ENCODE measurements at regions of chr9 and their contacts with region 1.

Region 1: DNA sequence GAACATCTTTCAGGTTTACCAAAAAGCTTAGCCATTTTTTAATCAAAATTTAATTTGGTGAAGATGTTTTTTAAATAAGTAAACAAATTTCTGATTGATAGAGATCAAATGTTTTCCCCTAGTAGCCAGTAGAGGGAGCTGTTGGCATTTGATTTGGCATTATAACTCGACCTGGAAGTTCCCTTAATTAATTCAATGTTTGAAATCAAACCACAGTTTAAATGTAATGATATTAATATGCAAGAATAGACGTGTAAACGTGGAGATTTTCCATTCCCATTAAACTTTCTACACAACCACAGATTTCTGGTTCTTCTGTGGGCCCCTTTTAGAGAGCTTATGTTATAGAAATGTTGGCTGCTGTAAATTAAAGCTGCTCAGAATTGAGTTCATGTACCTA is 148.1 kb upstream of the MPDZ start:
- DNase-seq: peak; percentile 78
- H3K4me3 ChIP-seq: no peak overlapping the region
- H3K27ac ChIP-seq: peak overlapping the region; percentile 34
- H3K4me1 ChIP-seq: peaks cover 6% of the 10 kb centered on the region
- H3K27me3 ChIP-seq: no peaks in the 10 kb centered on the region
- CTCF ChIP-seq: peak; percentile 40 to 43
- POLR2A ChIP-seq: no peak

Region 2: GRCh38 chr9:13110766-13111417 is 316.7 kb before region 1 on chr9:
- CTCF ChIA-PET with region 1: no interaction called
- POLR2A ChIA-PET with region 1: no interaction called
- dilution Hi-C with region 1: no loop called
- intact Hi-C with region 1: no loop called
- DNase-seq: no peak
- H3K4me3 ChIP-seq: no peak overlapping the region
- H3K27ac ChIP-seq: no peak overlapping the region
- H3K4me1 ChIP-seq: no peaks in the 10 kb centered on the region
- H3K27me3 ChIP-seq: no peaks in the 10 kb centered on the region
- CTCF ChIP-seq: no peak
- POLR2A ChIP-seq: no peak

Region 3: GRCh38 chr9:13351778-13352386 is 75.7 kb before region 1 on chr9:
- CTCF ChIA-PET with region 1: interaction called, 14 read pairs
- POLR2A ChIA-PET with region 1: no interaction called
- dilution Hi-C with region 1: no loop called
- intact Hi-C with region 1: loop called (anchors 5 kb)
- DNase-seq: peak; percentile 74
- H3K4me3 ChIP-seq: no peak overlapping the region
- H3K27ac ChIP-seq: no peak overlapping the region
- H3K4me1 ChIP-seq: no peaks in the 10 kb centered on the region
- H3K27me3 ChIP-seq: no peaks in the 10 kb centered on the region
- CTCF ChIP-seq: peak; percentile 32 to 37
- POLR2A ChIP-seq: no peak

Region 4: GRCh38 chr9:13568841-13569601 is 141.4 kb after region 1 on chr9:
- CTCF ChIA-PET with region 1: interaction called, 3 read pairs
- POLR2A ChIA-PET with region 1: no interaction called
- dilution Hi-C with region 1: no loop called
- intact Hi-C with region 1: loop called (anchors 5 kb)
- DNase-seq: peak; percentile 62
- H3K4me3 ChIP-seq: peak overlapping the region in 2 of 3 experiments; percentile 3 to 45
- H3K27ac ChIP-seq: peak overlapping the region; percentile 54
- H3K4me1 ChIP-seq: peaks cover 25% of the 10 kb centered on the region
- H3K27me3 ChIP-seq: no peaks in the 10 kb centered on the region
- CTCF ChIP-seq: no peak
- POLR2A ChIP-seq: no peak

Region 5: DNA sequence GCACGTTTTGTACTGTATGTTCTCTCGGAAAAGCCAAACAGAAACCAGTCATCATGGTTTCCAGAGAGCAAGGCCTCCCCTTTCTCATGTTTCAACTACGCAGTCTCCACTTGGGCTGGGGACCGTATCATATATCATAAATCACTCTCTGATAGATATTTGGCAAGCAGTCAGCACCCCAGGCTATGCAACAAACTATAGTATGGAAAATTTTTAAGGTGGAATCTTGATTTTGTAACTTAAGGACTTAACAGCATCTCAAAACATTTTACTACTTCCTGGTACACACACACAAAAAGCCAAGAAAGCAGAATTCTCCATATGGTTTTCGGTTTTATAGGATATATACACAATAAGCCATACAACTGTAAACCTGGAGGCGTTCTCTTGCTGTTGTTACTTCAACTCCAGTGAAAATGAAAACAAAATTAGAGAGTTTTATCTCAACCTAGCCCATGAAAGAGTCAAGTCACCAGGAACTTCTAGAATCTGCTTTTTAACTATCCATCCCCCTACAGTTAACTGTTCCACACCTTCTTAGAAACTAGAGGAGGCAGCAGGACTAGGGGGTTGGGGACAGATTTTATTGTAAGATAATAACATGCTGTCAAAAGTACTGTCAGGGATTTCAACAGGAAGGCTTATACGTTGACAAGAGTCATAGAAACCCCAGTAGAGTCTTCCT is 602.9 kb after region 1 on chr9:
- CTCF ChIA-PET with region 1: interaction called, 11 read pairs
- POLR2A ChIA-PET with region 1: no interaction called
- dilution Hi-C with region 1: no loop called
- intact Hi-C with region 1: loop called (anchors 2 kb)
- DNase-seq: peak; percentile 97
- H3K4me3 ChIP-seq: peak overlapping the region in 2 of 3 experiments; percentile 25 to 46
- H3K27ac ChIP-seq: peak overlapping the region; percentile 88
- H3K4me1 ChIP-seq: peaks cover 44% of the 10 kb centered on the region
- H3K27me3 ChIP-seq: no peaks in the 10 kb centered on the region
- CTCF ChIP-seq: no peak
- POLR2A ChIP-seq: peak; percentile 31

Region 6: DNA sequence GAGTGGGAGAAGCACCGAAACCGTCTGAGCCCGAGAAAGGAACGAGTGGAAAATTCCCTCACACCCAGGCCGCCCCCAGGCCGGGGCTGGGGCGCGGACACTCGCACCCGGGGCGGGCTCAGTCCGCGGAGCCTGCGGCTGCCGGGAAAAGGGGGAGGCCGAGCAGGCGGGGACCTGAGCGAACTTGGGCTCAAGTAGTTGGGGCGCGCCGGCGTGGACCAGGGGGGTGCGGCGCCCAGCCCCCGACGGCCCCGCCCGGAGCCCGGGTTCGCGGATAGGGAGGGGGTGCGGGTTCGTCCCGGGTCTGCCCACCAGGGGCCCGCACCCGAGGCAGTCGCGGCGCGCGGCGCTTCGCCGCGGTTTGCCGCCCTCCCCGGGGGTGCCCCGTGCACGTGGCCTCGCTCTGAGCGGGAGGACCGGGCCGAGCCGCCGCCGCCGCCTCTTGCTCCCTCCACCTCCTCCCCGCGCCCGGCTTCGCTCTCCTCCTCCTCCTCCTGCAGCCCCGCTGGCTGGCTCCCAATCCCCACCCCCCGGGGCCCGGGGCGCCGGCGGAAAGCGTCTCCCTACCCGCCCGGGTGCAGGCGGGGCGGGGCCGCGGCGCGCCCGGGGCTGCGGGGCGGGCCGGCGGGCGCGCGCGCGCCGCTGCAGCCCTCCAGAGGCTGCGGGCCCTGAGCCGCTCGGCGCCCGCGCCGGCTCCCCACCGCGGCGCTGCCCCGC is 887.5 kb after region 1 on chr9:
- CTCF ChIA-PET with region 1: interaction called, 10 read pairs
- POLR2A ChIA-PET with region 1: no interaction called
- dilution Hi-C with region 1: no loop called
- intact Hi-C with region 1: loop called (anchors 2 kb)
- DNase-seq: peak; percentile 67
- H3K4me3 ChIP-seq: peak overlapping the region; percentile 61 to 87 (median 85)
- H3K27ac ChIP-seq: peak overlapping the region; percentile 96
- H3K4me1 ChIP-seq: peaks cover 55% of the 10 kb centered on the region
- H3K27me3 ChIP-seq: no peaks in the 10 kb centered on the region
- CTCF ChIP-seq: no peak
- POLR2A ChIP-seq: no peak

Region 7: DNA sequence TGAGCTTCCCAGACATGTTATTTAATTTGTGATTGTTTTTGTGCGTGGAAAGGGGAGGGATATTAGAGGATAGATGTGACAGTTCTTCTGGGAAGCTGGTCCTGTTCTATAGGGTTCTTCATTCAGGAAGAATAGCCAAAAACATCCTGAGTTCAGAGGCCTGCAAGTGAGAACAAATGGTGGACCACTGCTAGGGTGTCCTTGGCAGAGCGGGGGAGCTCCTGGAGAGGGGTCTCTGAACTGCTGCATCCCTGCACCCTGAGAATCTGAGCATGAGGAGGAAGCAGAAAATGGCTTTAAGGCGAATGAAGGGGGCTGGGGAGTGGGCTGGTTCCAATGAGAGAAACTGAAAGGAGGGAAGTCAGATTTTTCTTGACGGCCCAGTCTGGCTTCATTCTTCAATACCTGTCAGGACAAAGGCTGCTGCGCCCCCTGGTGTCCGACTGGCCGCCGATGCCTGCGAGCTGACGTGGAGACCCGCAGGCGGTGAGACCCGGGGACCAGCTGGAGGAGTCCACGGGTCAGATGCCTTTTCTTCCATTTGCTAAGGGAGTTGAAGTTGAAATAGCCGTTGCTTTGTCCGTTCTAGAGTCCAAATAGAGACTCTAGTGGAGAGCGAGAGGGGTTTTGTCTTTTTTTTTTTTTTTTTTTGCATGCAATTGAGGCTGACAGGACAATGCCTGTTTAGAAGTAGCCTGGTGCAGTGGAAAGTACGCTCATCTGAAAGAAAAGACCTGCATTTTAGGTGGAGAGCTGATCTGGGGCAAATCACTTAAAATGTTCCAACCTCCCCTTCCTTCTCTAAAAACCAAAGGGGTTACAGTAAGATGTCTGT is 925.9 kb after region 1 on chr9:
- CTCF ChIA-PET with region 1: interaction called, 60 read pairs
- POLR2A ChIA-PET with region 1: no interaction called
- dilution Hi-C with region 1: no loop called
- intact Hi-C with region 1: loop called (anchors 1 kb)
- DNase-seq: peak; percentile 89
- H3K4me3 ChIP-seq: no peak overlapping the region
- H3K27ac ChIP-seq: peak overlapping the region; percentile 2
- H3K4me1 ChIP-seq: peaks cover 45% of the 10 kb centered on the region
- H3K27me3 ChIP-seq: no peaks in the 10 kb centered on the region
- CTCF ChIP-seq: peak; percentile 95 to 97
- POLR2A ChIP-seq: no peak

Region 8: DNA sequence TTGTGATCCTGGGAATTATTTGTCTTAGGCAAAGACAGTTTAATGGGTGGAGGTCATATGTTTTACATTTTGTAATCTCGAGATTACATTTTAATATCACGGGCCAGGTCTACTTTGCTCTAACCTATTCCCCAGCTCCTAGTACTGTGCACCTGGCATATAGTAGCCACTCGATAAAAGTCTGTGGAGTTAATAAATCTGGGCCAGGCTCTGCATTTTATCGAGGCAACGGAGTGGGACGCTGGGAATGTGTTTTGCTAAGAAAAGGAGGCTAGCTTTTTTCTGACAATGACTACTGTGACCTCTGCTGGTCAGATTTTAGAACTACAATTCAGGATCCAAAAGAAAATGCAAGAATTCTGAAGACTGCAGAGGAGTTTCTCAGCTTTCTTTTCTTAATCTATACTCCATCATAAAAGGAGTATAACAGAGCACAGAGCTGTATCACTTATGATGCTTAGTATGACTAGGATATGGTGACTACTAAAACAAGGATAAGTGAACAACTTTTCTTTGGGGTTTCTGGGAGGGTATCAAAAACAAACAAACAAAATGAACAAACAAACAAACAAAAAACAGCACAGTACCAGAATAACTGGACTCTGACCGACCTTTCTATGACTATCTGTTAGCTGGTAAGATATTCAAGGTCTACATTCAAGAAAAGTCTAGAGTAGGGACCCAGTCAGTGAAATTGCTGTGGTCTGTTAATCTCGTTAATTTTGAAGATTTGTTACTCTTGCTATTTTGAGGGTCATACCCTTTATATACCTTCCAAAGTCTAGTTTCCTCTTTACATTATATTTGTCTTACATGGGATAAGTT is 1341.0 kb after region 1 on chr9:
- CTCF ChIA-PET with region 1: interaction called, 6 read pairs
- POLR2A ChIA-PET with region 1: no interaction called
- dilution Hi-C with region 1: no loop called
- intact Hi-C with region 1: loop called (anchors 2 kb)
- DNase-seq: peak; percentile 77
- H3K4me3 ChIP-seq: no peak overlapping the region
- H3K27ac ChIP-seq: no peak overlapping the region
- H3K4me1 ChIP-seq: peaks cover 3% of the 10 kb centered on the region
- H3K27me3 ChIP-seq: no peaks in the 10 kb centered on the region
- CTCF ChIP-seq: peak; percentile 44 to 47
- POLR2A ChIP-seq: no peak

Measured in endothelial cell of umbilical vein (primary cell).